ENCODE measurements at regions of chr3 and their contacts with region 1.

Region 1: DNA sequence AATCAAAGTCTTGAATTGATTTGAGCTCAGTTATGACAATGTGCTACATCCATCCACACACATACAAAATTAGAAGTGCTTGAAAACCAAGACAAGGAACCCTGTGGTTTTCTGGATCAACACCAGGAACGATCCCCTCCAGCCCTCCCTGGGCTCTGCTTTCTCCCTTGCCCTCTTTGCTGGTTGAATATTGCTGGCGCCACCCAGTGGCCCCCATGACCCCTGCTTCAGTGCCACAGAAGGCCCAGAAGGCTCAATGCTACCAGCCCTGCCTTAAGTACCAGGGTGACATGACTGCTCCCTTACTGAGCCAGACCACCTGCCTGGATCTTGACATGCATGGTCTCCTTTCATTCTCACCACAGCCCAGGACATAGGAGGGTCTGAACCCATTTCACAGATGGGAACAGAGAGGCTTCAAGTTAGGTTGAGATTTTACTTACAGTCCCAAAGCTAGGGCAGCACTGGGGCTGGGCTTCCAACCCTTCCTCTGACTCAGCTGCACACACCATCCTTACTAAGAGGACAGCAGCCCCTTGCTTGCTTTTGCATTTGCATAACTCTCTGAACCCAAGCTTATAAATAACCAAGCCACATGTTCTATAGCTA is 15.0 kb downstream of the IL12A start:
- DNase-seq: peak; percentile 66
- H3K4me3 Mint-ChIP-seq: no peak overlapping the region
- H3K27ac Mint-ChIP-seq: no peak overlapping the region
- H3K4me1 Mint-ChIP-seq: peaks cover 6% of the 10 kb centered on the region
- H3K27me3 Mint-ChIP-seq: no peaks in the 10 kb centered on the region
- CTCF ChIP-seq: peak; percentile 69

Region 2: DNA sequence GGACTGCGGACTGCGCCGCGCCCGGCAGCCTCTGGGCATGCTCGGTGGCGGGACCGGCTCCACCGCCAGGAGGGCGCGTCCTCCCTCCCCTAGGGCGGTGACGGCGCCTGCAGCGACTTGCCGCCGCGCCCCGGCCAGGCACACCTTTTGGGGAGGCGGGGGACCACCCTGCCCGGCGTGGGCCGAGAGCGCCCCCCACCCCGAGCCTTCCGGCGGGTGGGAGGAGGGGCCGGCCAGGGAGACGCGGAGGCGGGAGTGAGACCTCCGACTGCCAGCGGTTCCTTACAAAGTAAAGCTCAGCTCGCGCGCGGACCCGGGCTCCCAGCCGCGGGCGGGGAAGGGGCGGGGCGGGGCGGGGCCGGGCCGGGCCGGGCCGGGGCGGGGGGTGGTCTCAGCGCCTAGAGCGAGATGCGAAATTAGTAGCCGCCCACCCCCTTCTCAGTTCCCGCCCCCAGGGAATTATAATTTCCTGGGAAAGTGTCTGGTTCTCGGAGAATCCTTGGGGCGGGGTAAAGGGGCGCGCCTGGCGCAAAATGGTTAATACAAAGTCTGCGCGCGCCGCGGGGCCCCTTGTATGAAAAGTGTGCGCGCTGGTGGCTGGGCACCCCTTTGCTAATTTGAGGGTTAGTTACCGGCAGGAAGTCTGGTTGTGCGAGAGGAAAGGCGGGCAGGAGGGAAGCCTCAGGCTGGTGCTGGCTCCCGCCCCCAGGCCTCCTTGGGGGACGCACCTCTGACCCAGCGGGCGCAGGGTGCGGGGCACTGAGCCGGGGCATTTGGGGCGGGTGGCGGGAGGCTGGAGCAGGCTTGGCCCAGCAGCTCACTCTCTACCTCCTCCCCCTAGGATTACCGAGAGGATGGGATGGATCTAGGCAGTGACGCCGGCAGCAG is 239.8 kb before region 1 on chr3:
- CTCF ChIA-PET with region 1: interaction called, 9 read pairs
- POLR2A ChIA-PET with region 1: interaction called, 3 read pairs
- intact Hi-C with region 1: loop called (anchors 2 kb)
- DNase-seq: peak; percentile 81
- H3K4me3 Mint-ChIP-seq: peak overlapping the region; percentile 81
- H3K27ac Mint-ChIP-seq: peak overlapping the region; percentile 90
- H3K4me1 Mint-ChIP-seq: peaks cover 40% of the 10 kb centered on the region
- H3K27me3 Mint-ChIP-seq: no peaks in the 10 kb centered on the region
- CTCF ChIP-seq: no peak

Region 3: DNA sequence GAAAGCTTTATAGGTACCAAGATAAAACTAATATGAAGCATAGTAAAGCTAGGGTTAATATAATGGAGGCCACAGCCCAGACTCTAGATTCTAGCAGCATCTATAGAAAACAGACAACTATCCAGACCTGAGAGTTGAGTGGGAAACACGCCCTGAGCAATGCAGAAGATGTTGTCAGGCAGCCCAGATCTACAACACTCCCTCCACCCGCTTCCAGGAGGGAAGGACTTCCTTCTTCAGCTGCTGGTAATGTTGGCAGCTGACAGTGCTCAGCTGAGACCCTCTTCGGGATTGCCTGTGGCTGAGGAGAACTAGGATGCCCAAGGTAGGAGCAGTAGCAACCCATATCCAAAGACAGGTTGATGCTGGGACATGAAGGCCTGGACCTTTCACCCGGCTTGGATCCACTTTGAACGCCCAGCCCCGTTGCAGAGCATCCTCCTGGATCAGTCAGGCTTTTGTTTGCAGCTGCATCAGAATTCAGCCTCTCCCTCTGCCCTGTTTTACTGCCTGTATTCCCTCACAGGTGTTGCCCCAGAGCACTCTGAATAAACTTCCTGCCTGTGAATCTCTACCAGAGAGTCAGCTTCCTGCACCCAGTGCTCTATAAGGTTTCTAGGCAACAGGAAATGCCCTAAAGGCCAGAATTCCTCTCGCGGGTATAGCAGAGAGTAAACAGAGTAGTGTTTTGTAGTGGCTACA is 189.7 kb before region 1 on chr3:
- CTCF ChIA-PET with region 1: interaction called, 27 read pairs
- POLR2A ChIA-PET with region 1: interaction called, 3 read pairs
- intact Hi-C with region 1: loop called (anchors 5 kb)
- DNase-seq: peak; percentile 74
- H3K4me3 Mint-ChIP-seq: peak overlapping the region; percentile 16
- H3K27ac Mint-ChIP-seq: peak overlapping the region; percentile 91
- H3K4me1 Mint-ChIP-seq: peaks cover 12% of the 10 kb centered on the region
- H3K27me3 Mint-ChIP-seq: no peaks in the 10 kb centered on the region
- CTCF ChIP-seq: no peak

Region 4: DNA sequence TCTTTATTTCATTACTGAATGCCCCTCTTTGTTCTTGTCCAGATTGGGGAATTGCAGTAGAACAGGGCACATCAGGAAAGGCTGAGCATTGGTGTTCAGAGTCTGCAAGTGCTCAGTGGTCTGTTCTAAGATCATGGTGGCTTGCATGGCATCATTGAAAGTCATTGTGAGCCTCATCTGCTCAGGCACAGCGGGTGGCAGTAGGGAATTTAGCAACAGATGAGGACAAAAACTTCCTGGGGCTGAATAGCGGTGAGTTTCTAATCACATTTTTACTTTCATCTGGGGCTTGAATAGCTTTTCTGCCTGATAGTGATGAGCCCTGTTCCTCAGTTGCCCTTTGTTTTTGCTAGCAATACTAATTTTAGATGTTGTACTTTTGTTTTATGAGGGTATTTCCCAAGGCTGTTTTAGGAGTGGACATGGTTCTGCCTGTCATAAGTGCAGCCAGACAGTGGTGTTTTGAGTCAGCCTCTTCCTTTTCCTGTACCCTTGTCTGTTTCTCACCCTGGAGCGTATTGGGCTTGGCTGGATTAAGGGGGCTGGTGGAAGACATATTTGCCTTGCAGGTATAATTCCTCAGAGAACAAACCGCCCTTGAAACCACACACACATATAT is 142.1 kb before region 1 on chr3:
- CTCF ChIA-PET with region 1: interaction called, 10 read pairs
- POLR2A ChIA-PET with region 1: no interaction called
- intact Hi-C with region 1: no loop called
- DNase-seq: no peak
- H3K4me3 Mint-ChIP-seq: no peak overlapping the region
- H3K27ac Mint-ChIP-seq: peak overlapping the region; percentile 65
- H3K4me1 Mint-ChIP-seq: peaks cover 42% of the 10 kb centered on the region
- H3K27me3 Mint-ChIP-seq: no peaks in the 10 kb centered on the region
- CTCF ChIP-seq: no peak

Region 5: DNA sequence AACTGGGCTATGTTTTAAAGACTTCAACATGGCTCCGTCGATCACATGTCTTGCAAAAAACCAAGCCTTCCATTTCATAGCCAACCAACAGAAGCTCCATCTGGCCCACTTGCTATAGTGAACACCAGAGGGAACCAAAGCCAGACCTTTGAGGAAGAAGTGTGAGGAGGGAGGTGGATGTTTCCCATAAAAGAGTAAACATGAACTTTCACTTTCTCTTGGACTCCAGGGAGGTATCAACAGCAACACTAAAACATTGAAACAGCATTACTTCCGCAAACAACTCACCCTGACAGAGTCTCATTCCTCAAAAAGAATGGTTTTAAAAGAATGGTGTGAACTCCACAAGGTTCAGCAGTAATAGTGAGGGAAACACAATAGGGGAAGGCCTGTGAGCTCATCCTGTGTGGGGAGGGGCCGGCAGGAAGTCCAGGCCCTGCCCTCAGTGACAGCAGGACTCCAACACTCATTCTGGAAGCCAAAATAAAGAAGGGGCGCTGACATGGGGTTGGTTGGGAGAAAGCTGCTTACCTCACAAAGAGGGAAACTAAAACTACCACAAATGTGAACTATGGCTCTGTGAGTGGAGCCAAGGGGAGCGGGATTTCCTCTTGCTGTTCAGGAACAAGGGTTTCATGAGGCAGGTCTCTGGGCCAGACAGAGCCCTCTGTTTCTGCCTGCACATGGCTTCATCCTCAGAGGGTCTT is 74.0 kb before region 1 on chr3:
- CTCF ChIA-PET with region 1: interaction called, 87 read pairs
- POLR2A ChIA-PET with region 1: no interaction called
- intact Hi-C with region 1: loop called (anchors 1 kb)
- DNase-seq: peak; percentile 64
- H3K4me3 Mint-ChIP-seq: peak overlapping the region; percentile 33
- H3K27ac Mint-ChIP-seq: peak overlapping the region; percentile 24
- H3K4me1 Mint-ChIP-seq: peaks cover 16% of the 10 kb centered on the region
- H3K27me3 Mint-ChIP-seq: no peaks in the 10 kb centered on the region
- CTCF ChIP-seq: peak; percentile 24

Region 6: GRCh38 chr3:160027541-160028195 is 24.0 kb after region 1 on chr3:
- CTCF ChIA-PET with region 1: interaction called, 20 read pairs
- POLR2A ChIA-PET with region 1: no interaction called
- intact Hi-C with region 1: no loop called
- DNase-seq: peak; percentile 56
- H3K4me3 Mint-ChIP-seq: no peak overlapping the region
- H3K27ac Mint-ChIP-seq: no peak overlapping the region
- H3K4me1 Mint-ChIP-seq: peaks cover 13% of the 10 kb centered on the region
- H3K27me3 Mint-ChIP-seq: no peaks in the 10 kb centered on the region
- CTCF ChIP-seq: no peak

Measured in MCF 10A (cell line).